Breast epithelium (tissue), 4 donors: ENCODE measurements at regions of chr2 and their contacts with region 1.

Region 1: GRCh38 chr2:235534678-235535422 is 41.0 kb downstream of the AGAP1 start:
- DNase-seq: no peak
- H3K4me3 ChIP-seq: no peak overlapping the region
- H3K27ac ChIP-seq: no peak overlapping the region
- H3K4me1 ChIP-seq: no peaks in the 10 kb centered on the region
- H3K27me3 ChIP-seq: no peaks in the 10 kb centered on the region
- CTCF ChIP-seq: no peak
- POLR2A ChIP-seq: no peak

Region 2: DNA sequence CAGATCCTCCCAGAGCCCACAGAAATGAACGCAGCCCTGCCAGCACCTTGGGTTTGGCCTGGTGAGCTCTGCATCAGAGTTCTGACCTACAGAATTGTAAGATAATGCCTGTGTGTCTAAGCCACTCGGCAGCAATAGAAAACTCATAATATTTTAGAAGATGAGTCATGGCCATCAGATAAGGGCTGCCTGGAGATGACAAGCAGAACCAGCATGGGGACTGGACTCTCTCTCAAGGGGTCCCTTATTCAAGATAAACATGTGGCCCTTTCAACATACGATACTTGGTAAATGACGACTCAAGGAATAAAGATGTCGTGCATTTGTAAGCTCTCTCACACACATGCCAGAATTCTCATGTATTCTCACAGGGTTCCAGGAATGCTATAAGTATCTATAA is 49.5 kb before region 1 on chr2:
- intact Hi-C with region 1: loop called (anchors 2 kb)
- DNase-seq: no peak
- H3K4me3 ChIP-seq: no peak overlapping the region
- H3K27ac ChIP-seq: no peak overlapping the region
- H3K4me1 ChIP-seq: no peaks in the 10 kb centered on the region
- H3K27me3 ChIP-seq: no peaks in the 10 kb centered on the region
- CTCF ChIP-seq: no peak
- POLR2A ChIP-seq: no peak